ENCODE measurements at regions of chr10 and their contacts with region 1.

Region 1: DNA sequence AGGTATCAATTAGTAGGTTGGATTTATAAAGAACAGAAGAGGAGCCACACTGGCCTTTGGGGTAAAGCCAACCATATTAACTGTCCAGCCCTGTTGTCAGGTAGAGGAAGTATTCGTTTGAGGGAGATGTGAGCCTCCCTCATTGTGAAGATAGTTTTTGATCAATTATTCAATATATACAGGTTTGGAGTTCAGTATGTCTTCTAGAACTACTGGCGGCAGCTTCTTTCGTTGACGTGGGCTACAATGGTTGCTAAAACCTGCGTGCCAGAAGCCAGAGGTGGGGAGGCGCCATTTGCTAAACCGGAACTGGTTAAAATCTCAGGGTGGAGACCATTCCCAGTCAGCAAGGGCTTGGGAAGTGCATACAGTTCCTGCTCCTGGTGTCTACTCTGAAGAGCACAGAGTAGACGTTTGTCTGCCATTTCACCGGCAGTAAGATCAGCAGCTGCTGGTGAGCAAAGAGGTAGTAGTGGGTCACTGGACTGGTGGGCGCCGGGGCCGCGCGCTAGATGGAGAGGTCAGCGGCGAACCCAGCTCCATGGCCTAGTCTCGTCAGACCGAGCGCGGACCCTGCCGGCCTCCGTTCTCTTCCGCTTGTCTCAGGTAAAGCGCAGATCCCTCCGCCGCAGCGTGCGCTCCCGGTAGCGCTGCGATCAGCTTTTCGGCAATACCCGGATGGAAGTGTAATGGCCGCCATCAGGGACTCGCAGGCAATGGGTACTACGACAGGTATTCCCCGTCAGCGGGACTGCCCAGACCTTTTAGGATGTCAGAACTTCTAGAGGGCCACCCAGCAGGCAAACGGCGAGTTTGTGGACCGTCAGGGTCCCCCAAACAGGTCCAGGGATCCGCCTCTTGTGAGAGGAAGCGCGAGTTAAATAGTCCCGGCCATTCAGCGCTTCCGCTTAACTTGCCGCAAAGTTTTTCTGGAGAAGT is at the start of gene ZNF518A:
- DNase-seq: peak; percentile 86 to 96 (median 94)
- ATAC-seq: peak; percentile 90
- H3K4me3 ChIP-seq: peak within 1 kb of the TSS; percentile 88
- H3K4me3 Mint-ChIP-seq: peak within 1 kb of the TSS; percentile 79 to 98 (median 94)
- H3K27ac ChIP-seq: peak within 1 kb of the TSS; percentile 97
- H3K27ac Mint-ChIP-seq: peak within 1 kb of the TSS; percentile 97 to 100 (median 99)
- H3K4me1 ChIP-seq: peaks cover 6 to 20% of the 10 kb centered on the region in 2 donors
- H3K4me1 Mint-ChIP-seq: peaks cover 7 to 35% (median 32%) of the 10 kb centered on the region in 7 donors
- H3K27me3 ChIP-seq: peaks cover 0 to 8% of the 10 kb centered on the region in 2 donors
- H3K27me3 Mint-ChIP-seq: peaks cover 30 to 46% (median 39%) of the 10 kb centered on the region in 5 donors
- total RNA-seq, gene ZNF518A: 17.6 to 25.1 (median 21.5) TPM

Region 2: GRCh38 chr10:94362360-94363250 is 1767.1 kb before region 1 on chr10 and contains the start of gene NOC3L:
- CTCF ChIA-PET with region 1: no interaction called
- POLR2A ChIA-PET with region 1: no interaction called
- intact Hi-C with region 1: loop called in 1 of 2 experiments (anchors 10 kb)
- DNase-seq: peak; percentile 85 to 96 (median 91)
- ATAC-seq: peak; percentile 97
- H3K4me3 ChIP-seq: peak within 1 kb of the TSS; percentile 76
- H3K4me3 Mint-ChIP-seq: peak within 1 kb of the TSS; percentile 93 to 98 (median 96)
- H3K27ac ChIP-seq: peak within 1 kb of the TSS; percentile 92
- H3K27ac Mint-ChIP-seq: peak within 1 kb of the TSS; percentile 90 to 99 (median 97)
- H3K4me1 ChIP-seq: peaks cover 13 to 18% of the 10 kb centered on the region in 2 donors
- H3K4me1 Mint-ChIP-seq: peaks cover 20 to 54% (median 42%) of the 10 kb centered on the region in 7 donors
- H3K27me3 ChIP-seq: no peaks in the 10 kb centered on the region
- H3K27me3 Mint-ChIP-seq: peaks cover 0 to 14% (median 9%) of the 10 kb centered on the region in 5 donors
- total RNA-seq, gene NOC3L: 8.6 to 28.8 (median 24.8) TPM

Region 3: DNA sequence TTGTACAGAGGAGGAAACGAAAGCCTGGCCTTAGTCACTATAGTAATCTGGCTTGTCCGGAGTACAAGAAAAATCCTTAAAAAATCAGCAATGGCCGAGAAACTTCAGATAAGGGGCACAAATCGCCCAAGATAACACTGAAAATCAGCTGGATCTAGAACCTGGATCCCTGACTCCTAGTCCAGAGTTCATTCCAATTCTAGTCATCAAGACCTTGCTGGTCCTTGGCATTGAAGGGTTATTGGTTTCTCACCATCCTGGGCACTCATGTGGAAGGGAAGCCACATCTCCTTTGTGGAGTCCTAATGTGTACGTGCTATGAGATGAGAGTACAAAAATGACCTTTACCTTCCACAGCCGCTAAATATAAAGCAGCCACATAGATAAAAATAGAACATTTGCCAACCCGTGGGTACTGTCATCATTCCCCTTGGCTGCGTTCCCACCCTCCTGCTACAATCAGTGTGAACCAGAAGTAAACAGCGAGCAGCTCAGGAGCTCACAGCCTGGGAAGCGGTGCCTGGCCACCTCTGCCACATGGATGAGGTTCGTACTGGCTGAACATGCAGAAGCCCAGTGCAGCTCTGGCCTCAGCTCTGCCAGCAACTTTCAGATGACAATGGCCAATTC is 722.9 kb before region 1 on chr10:
- CTCF ChIA-PET with region 1: no interaction called
- POLR2A ChIA-PET with region 1: no interaction called
- intact Hi-C with region 1: no loop called
- DNase-seq: no peak
- ATAC-seq: no peak
- H3K4me3 ChIP-seq: no peak overlapping the region
- H3K4me3 Mint-ChIP-seq: no peak overlapping the region
- H3K27ac ChIP-seq: no peak overlapping the region
- H3K27ac Mint-ChIP-seq: no peak overlapping the region
- H3K4me1 ChIP-seq: no peaks in the 10 kb centered on the region
- H3K4me1 Mint-ChIP-seq: no peaks in the 10 kb centered on the region
- H3K27me3 ChIP-seq: no peaks in the 10 kb centered on the region
- H3K27me3 Mint-ChIP-seq: peaks cover 0 to 5% (median 0%) of the 10 kb centered on the region in 5 donors

Region 4: DNA sequence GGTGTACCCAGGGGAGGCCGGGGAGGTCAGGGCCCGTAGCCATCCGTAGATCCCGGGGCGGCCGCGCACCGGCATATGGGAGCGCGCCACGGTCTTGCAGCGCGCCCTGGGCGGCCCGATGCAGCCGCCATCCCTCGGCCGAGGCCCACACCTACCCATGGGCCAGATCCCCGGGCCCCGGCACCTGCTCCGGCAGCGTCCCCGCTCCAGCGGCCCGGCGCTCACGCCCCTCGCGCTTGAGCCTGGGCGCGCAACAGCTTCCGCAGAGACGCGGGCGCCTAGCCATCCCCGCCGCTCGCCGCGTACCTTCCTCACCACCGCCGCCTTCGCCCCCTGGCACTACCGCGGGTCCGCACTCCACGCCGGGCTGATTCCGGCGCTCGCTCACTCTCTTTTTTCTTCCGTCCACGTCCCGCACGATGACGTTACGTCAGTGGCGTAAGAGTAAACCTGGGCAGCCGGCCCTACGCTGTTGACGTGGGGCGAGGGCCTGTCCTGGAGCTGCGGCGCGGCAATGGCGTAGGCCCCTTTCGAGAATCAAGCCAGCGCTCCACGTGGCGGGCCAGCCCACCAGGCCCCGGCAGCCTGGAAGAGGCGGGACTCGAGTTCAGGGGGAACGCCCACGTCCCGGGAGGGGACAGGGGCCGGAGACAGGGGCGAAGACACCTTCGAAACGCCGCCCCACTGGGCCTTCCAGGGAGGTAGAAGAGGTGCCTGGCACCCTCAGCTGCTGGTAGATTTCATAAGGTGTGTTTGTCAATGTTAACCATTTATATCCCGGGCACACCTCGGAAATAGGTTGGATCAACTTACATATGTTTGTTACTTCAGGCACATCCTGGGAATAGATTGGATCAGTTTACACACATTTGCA is 473.1 kb before region 1 on chr10 and contains the start of gene ALDH18A1:
- CTCF ChIA-PET with region 1: no interaction called
- POLR2A ChIA-PET with region 1: no interaction called
- intact Hi-C with region 1: loop called in 1 of 2 experiments (anchors 2 kb)
- DNase-seq: peak; percentile 78 to 95 (median 88)
- ATAC-seq: peak; percentile 95
- H3K4me3 ChIP-seq: peak within 1 kb of the TSS; percentile 78
- H3K4me3 Mint-ChIP-seq: peak within 1 kb of the TSS; percentile 98 to 100 (median 99)
- H3K27ac ChIP-seq: peak within 1 kb of the TSS; percentile 72
- H3K27ac Mint-ChIP-seq: peak within 1 kb of the TSS; percentile 82 to 97 (median 93)
- H3K4me1 ChIP-seq: peaks cover 7 to 13% of the 10 kb centered on the region in 2 donors
- H3K4me1 Mint-ChIP-seq: peaks cover 7 to 40% (median 27%) of the 10 kb centered on the region in 7 donors
- H3K27me3 ChIP-seq: no peaks in the 10 kb centered on the region
- H3K27me3 Mint-ChIP-seq: peaks cover 0 to 3% (median 0%) of the 10 kb centered on the region in 5 donors
- total RNA-seq, gene ALDH18A1: 15.0 to 73.8 (median 26.0) TPM

Region 5: DNA sequence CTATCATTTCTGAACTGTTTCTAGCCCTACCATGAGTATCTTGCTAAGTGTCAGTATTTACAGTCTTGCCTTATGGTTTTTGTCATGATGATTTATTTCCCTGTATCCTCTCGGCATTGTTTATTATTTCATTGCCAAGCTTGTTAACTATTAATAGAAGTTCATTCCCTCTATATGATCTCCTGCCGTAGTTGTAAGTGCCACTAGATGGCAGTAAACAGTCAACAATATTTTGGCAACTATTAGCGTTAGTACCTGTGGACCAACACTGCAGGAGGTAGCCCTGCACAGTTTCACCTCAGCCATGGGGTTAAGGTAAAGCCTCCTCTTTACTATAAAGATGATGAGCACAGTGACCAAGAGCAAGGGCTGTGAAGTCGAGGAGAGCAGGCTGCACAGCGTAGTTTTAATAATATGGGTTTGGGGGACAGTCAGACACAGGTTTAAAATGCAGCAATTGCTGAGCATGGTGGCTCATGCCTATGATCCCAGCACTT is 112.4 kb before region 1 on chr10:
- CTCF ChIA-PET with region 1: no interaction called
- POLR2A ChIA-PET with region 1: no interaction called
- intact Hi-C with region 1: loop called in 1 of 2 experiments (anchors 1 kb)
- DNase-seq: peak in 7 of 9 donors; percentile 17 to 57 (median 53)
- ATAC-seq: peak; percentile 90
- H3K4me3 ChIP-seq: no peak overlapping the region
- H3K4me3 Mint-ChIP-seq: no peak overlapping the region
- H3K27ac ChIP-seq: no peak overlapping the region
- H3K27ac Mint-ChIP-seq: no peak overlapping the region
- H3K4me1 ChIP-seq: no peaks in the 10 kb centered on the region
- H3K4me1 Mint-ChIP-seq: peaks cover 0 to 5% (median 3%) of the 10 kb centered on the region in 7 donors
- H3K27me3 ChIP-seq: peaks cover 0 to 5% of the 10 kb centered on the region in 2 donors
- H3K27me3 Mint-ChIP-seq: peaks cover 8 to 23% (median 14%) of the 10 kb centered on the region in 5 donors

Region 6: DNA sequence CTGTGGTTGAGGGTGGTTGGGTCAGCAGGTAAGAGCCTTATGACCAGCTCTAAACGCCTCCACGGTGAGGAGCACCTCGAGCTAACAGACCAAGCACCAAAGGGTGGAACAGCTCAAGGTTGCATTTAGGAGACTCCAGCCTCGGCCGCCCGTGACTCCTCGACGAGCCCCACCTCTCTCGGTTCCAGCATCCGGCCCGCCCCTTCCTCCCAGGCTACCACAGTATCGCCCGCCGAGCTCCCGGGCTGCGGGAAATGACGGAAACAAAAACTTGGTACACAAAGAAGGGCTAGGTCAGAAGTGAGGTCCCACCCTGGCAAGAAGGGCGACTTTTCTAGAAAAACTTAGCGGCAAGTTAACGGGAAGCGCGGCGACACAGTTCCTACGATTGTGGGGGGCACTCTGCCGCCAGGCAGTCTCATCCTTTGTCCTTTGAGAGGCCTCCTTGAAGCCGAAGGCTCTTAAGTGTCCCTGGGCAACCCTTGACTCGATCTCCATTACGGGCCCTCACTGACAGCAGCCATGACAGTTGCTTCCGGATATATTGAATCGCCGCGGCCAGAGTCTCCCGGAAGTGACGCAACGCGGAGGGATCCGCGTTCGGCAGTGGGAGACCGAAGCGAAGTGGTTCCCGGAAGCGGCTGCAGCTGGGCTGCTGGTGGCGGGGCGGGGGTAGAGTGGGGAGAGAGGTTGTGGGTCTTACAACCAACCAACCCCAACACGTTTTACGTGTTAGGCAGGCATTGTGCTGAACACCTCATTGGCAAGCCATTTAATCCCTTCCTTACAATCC is 39.8 kb before region 1 on chr10:
- CTCF ChIA-PET with region 1: interaction called, 20 read pairs
- POLR2A ChIA-PET with region 1: interaction called, 158 read pairs
- intact Hi-C with region 1: loop called (anchors 1 kb)
- DNase-seq: peak; percentile 87 to 94 (median 92)
- ATAC-seq: peak; percentile 94
- H3K4me3 ChIP-seq: peak overlapping the region; percentile 99
- H3K4me3 Mint-ChIP-seq: peak overlapping the region; percentile 87 to 98 (median 94)
- H3K27ac ChIP-seq: peak overlapping the region; percentile 93
- H3K27ac Mint-ChIP-seq: peak overlapping the region; percentile 96 to 99 (median 99)
- H3K4me1 ChIP-seq: peaks cover 4 to 8% of the 10 kb centered on the region in 2 donors
- H3K4me1 Mint-ChIP-seq: peaks cover 0 to 15% (median 14%) of the 10 kb centered on the region in 7 donors
- H3K27me3 ChIP-seq: peaks cover 3 to 4% of the 10 kb centered on the region in 2 donors
- H3K27me3 Mint-ChIP-seq: peaks cover 29 to 36% (median 30%) of the 10 kb centered on the region in 5 donors

Region 7: DNA sequence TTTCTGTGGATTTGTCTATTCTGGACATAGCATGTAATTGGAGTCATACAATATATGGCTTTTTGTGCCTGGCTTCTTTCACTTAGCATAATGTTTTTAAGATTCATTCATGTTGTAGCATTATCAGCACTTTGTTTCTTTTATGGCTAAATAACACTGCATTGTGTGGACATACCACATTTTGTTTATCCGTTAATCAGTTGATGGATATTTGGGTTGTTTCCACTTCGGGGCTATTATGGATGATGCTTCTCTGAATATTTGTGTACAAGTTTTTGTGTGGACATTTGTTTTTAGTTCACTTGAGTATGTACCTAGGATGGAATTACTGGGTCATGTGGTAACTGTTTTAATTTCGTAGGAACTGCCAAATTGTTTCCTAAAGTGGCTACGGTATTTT is 708.9 kb after region 1 on chr10:
- CTCF ChIA-PET with region 1: no interaction called
- POLR2A ChIA-PET with region 1: no interaction called
- intact Hi-C with region 1: loop called in 1 of 2 experiments (anchors 2 kb)
- DNase-seq: no peak
- ATAC-seq: no peak
- H3K4me3 ChIP-seq: no peak overlapping the region
- H3K4me3 Mint-ChIP-seq: peak overlapping the region in 5 of 10 donors; percentile 11 to 22 (median 15)
- H3K27ac ChIP-seq: no peak overlapping the region
- H3K27ac Mint-ChIP-seq: peak overlapping the region in 1 of 9 donors; percentile 73
- H3K4me1 ChIP-seq: peaks cover 16 to 17% of the 10 kb centered on the region in 2 donors
- H3K4me1 Mint-ChIP-seq: peaks cover 53 to 95% (median 71%) of the 10 kb centered on the region in 7 donors
- H3K27me3 ChIP-seq: no peaks in the 10 kb centered on the region
- H3K27me3 Mint-ChIP-seq: peaks cover 0 to 2% (median 0%) of the 10 kb centered on the region in 5 donors